Esophagus muscularis mucosa (tissue), 4 donors: ENCODE measurements at regions of chr13 and their contacts with region 1.

Region 1: GRCh38 chr13:99969919-99970621 is 1.5 kb downstream of the ZIC5 start:
- DNase-seq: no peak
- H3K4me3 ChIP-seq: peak overlapping the region; percentile 35 to 54 (median 46)
- H3K27ac ChIP-seq: no peak overlapping the region
- H3K4me1 ChIP-seq: peaks cover 33 to 47% (median 39%) of the 10 kb centered on the region in 4 donors
- H3K27me3 ChIP-seq: peaks cover 30 to 100% (median 79%) of the 10 kb centered on the region in 4 donors
- CTCF ChIP-seq: no peak
- EP300 ChIP-seq: no peak
- POLR2A ChIP-seq: no peak

Region 2: GRCh38 chr13:99656092-99656745 is 313.9 kb before region 1 on chr13:
- intact Hi-C with region 1: loop called (anchors 10 kb)
- DNase-seq: peak; percentile 94
- H3K4me3 ChIP-seq: peak overlapping the region in 1 of 4 donors; percentile 9
- H3K27ac ChIP-seq: no peak overlapping the region
- H3K4me1 ChIP-seq: peaks cover 9 to 30% (median 27%) of the 10 kb centered on the region in 4 donors
- H3K27me3 ChIP-seq: no peaks in the 10 kb centered on the region
- CTCF ChIP-seq: peak; percentile 85 to 93 (median 92)
- EP300 ChIP-seq: no peak
- POLR2A ChIP-seq: no peak

Region 3: GRCh38 chr13:99895995-99896786 is 73.9 kb before region 1 on chr13:
- intact Hi-C with region 1: no loop called
- DNase-seq: no peak
- H3K4me3 ChIP-seq: peak overlapping the region; percentile 45 to 54 (median 48)
- H3K27ac ChIP-seq: no peak overlapping the region
- H3K4me1 ChIP-seq: peaks cover 6 to 20% (median 19%) of the 10 kb centered on the region in 4 donors
- H3K27me3 ChIP-seq: peaks cover 0 to 79% (median 40%) of the 10 kb centered on the region in 4 donors
- CTCF ChIP-seq: no peak
- EP300 ChIP-seq: no peak
- POLR2A ChIP-seq: no peak

Region 4: GRCh38 chr13:100274942-100275506 is 305.0 kb after region 1 on chr13:
- intact Hi-C with region 1: no loop called
- DNase-seq: no peak
- H3K4me3 ChIP-seq: no peak overlapping the region
- H3K27ac ChIP-seq: no peak overlapping the region
- H3K4me1 ChIP-seq: no peaks in the 10 kb centered on the region
- H3K27me3 ChIP-seq: no peaks in the 10 kb centered on the region
- CTCF ChIP-seq: no peak
- EP300 ChIP-seq: no peak
- POLR2A ChIP-seq: no peak